IMR-90 (cell line): ENCODE measurements at regions of chr3 and their contacts with region 1.

Region 1: GRCh38 chr3:133620066-133620784 is 41.5 kb downstream of the TOPBP1 start:
- DNase-seq: no peak
- ATAC-seq: no peak
- H3K4me3 ChIP-seq: no peak overlapping the region
- H3K27ac ChIP-seq: no peak overlapping the region
- H3K4me1 ChIP-seq: no peaks in the 10 kb centered on the region; the same call in 1 of the 2 replicates
- H3K27me3 ChIP-seq: no peaks in the 10 kb centered on the region
- CTCF ChIP-seq: no peak
- POLR2A ChIP-seq: no peak
- RAD21 ChIP-seq: no peak

Region 2: GRCh38 chr3:132722164-132723024 is 897.8 kb before region 1 on chr3 and contains the start of gene NPHP3:
- CTCF ChIA-PET with region 1: no interaction called
- POLR2A ChIA-PET with region 1: no interaction called
- dilution Hi-C with region 1: no loop called
- in situ Hi-C with region 1: loop called (anchors 25 kb)
- intact Hi-C with region 1: no loop called
- DNase-seq: peak; percentile 96
- ATAC-seq: peak; percentile 87
- H3K4me3 ChIP-seq: peak within 1 kb of the TSS; percentile 96
- H3K27ac ChIP-seq: peak within 1 kb of the TSS; percentile 88
- H3K4me1 ChIP-seq: peaks cover 7% of the 10 kb centered on the region
- H3K27me3 ChIP-seq: no peaks in the 10 kb centered on the region
- CTCF ChIP-seq: no peak
- POLR2A ChIP-seq: peak; percentile 89
- RAD21 ChIP-seq: no peak
- total RNA-seq, gene NPHP3: 21.3 and 26.9 TPM in 2 replicates

Region 3: DNA sequence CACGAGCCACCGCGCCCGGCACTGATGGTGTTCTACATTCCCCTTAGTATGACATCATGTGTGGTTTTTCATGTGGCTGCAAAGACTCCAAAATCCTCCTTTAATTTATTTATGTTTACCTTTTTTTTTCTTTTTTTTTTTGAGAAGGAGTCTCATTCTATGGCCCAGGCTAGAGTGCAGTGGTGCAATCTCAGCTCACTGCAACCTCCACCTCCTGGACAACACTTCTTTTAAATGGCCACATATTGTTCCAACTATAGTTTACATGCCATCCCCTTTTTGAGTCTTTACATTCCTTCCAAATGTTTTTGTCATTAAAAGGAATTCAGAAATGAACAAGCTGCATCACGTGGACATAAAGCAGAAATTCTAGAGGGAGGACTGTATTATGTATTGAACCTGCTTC is 57.0 kb before region 1 on chr3:
- CTCF ChIA-PET with region 1: no interaction called
- POLR2A ChIA-PET with region 1: no interaction called
- dilution Hi-C with region 1: no loop called
- in situ Hi-C with region 1: no loop called
- intact Hi-C with region 1: no loop called
- DNase-seq: peak; percentile 61
- ATAC-seq: peak; percentile 73
- H3K4me3 ChIP-seq: no peak overlapping the region
- H3K27ac ChIP-seq: no peak overlapping the region
- H3K4me1 ChIP-seq: peaks cover 11% of the 10 kb centered on the region
- H3K27me3 ChIP-seq: no peaks in the 10 kb centered on the region
- CTCF ChIP-seq: no peak
- POLR2A ChIP-seq: no peak
- RAD21 ChIP-seq: no peak

Region 4: DNA sequence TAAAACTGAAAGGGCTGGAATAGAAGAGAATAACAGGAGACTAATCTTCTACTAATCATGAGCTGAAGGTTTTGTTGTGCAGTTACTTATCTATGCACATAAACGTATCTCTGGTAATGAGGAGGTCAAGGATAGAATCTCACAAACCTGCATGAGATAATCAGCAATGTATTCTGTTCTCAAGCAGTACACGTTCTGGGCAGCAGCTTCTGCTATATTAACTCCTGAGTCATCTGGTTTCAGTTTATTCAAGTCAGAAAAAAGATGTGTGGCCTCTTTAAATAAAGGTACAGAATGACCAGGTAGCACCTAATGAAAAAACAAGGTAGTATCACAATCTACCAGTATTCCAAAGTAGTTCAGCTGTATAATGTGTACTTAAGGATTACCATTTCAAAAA is 11.8 kb before region 1 on chr3:
- CTCF ChIA-PET with region 1: no interaction called
- POLR2A ChIA-PET with region 1: no interaction called
- dilution Hi-C with region 1: no loop called
- in situ Hi-C with region 1: no loop called
- intact Hi-C with region 1: loop called (anchors 2 kb)
- DNase-seq: peak; percentile 18
- ATAC-seq: no peak
- H3K4me3 ChIP-seq: no peak overlapping the region
- H3K27ac ChIP-seq: no peak overlapping the region
- H3K4me1 ChIP-seq: no peaks in the 10 kb centered on the region
- H3K27me3 ChIP-seq: no peaks in the 10 kb centered on the region
- CTCF ChIP-seq: no peak
- POLR2A ChIP-seq: no peak
- RAD21 ChIP-seq: no peak

Region 5: DNA sequence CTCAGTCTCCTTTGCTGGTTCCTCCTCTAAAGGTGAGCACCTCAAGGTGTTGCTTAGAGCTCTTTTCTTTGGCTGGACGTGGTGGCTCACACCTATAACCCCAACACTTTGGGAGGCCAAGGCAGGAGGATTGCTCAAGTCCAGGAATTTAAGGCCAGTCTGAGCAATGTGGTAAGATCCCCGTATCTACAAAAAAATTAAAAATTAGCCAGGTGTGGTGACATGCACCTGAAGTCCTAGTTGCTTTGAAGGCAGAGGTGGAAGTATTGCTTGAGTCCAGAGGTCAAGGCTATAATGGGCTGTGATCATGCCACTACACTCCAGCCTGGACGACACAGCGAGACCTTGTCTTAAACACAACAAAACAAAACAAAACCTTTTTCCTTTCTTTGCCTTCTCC is 13.2 kb after region 1 on chr3:
- CTCF ChIA-PET with region 1: no interaction called
- POLR2A ChIA-PET with region 1: interaction called, 7 read pairs
- dilution Hi-C with region 1: no loop called
- in situ Hi-C with region 1: no loop called
- intact Hi-C with region 1: loop called (anchors 2 kb)
- DNase-seq: no peak
- ATAC-seq: no peak
- H3K4me3 ChIP-seq: no peak overlapping the region
- H3K27ac ChIP-seq: no peak overlapping the region
- H3K4me1 ChIP-seq: no peaks in the 10 kb centered on the region
- H3K27me3 ChIP-seq: no peaks in the 10 kb centered on the region
- CTCF ChIP-seq: no peak
- POLR2A ChIP-seq: no peak
- RAD21 ChIP-seq: no peak